ENCODE measurements at regions of chr1 and their contacts with region 1.

Region 1: GRCh38 chr1:184075055-184076029 is 23.8 kb downstream of the TSEN15 start:
- DNase-seq: peak; percentile 82
- H3K4me3 ChIP-seq: no peak overlapping the region
- H3K27ac ChIP-seq: peak overlapping the region; percentile 15 to 73 (median 70)
- H3K4me1 ChIP-seq: peaks cover 0 to 47% (median 42%) of the 10 kb centered on the region in 4 donors
- H3K27me3 ChIP-seq: no peaks in the 10 kb centered on the region
- CTCF ChIP-seq: peak; percentile 60 to 80 (median 70)
- EP300 ChIP-seq: no peak
- POLR2A ChIP-seq: no peak

Region 2: GRCh38 chr1:184017306-184017705 is 58.0 kb before region 1 on chr1:
- intact Hi-C with region 1: no loop called
- DNase-seq: no peak
- H3K4me3 ChIP-seq: no peak overlapping the region
- H3K27ac ChIP-seq: no peak overlapping the region
- H3K4me1 ChIP-seq: peaks cover 0 to 41% (median 32%) of the 10 kb centered on the region in 4 donors
- H3K27me3 ChIP-seq: no peaks in the 10 kb centered on the region
- CTCF ChIP-seq: no peak
- EP300 ChIP-seq: no peak
- POLR2A ChIP-seq: no peak

Region 3: GRCh38 chr1:184127520-184127919 is 52.2 kb after region 1 on chr1:
- intact Hi-C with region 1: no loop called
- DNase-seq: no peak
- H3K4me3 ChIP-seq: no peak overlapping the region
- H3K27ac ChIP-seq: no peak overlapping the region
- H3K4me1 ChIP-seq: no peaks in the 10 kb centered on the region
- H3K27me3 ChIP-seq: no peaks in the 10 kb centered on the region
- CTCF ChIP-seq: no peak
- EP300 ChIP-seq: no peak
- POLR2A ChIP-seq: no peak

Region 4: GRCh38 chr1:184210031-184210430 is 134.7 kb after region 1 on chr1:
- intact Hi-C with region 1: no loop called
- DNase-seq: peak; percentile 68
- H3K4me3 ChIP-seq: no peak overlapping the region
- H3K27ac ChIP-seq: no peak overlapping the region
- H3K4me1 ChIP-seq: peaks cover 0 to 10% (median 0%) of the 10 kb centered on the region in 4 donors
- H3K27me3 ChIP-seq: no peaks in the 10 kb centered on the region
- CTCF ChIP-seq: no peak
- EP300 ChIP-seq: no peak
- POLR2A ChIP-seq: no peak

Region 5: GRCh38 chr1:184222652-184223052 is 147.3 kb after region 1 on chr1:
- intact Hi-C with region 1: loop called (anchors 5 kb)
- DNase-seq: peak; percentile 70
- H3K4me3 ChIP-seq: peak overlapping the region in 1 of 4 donors; percentile 8
- H3K27ac ChIP-seq: no peak overlapping the region
- H3K4me1 ChIP-seq: peaks cover 0 to 6% (median 2%) of the 10 kb centered on the region in 4 donors
- H3K27me3 ChIP-seq: no peaks in the 10 kb centered on the region
- CTCF ChIP-seq: peak; percentile 77 to 96 (median 92)
- EP300 ChIP-seq: no peak
- POLR2A ChIP-seq: no peak

Region 6: GRCh38 chr1:184563308-184563707 is 488.0 kb after region 1 on chr1:
- intact Hi-C with region 1: loop called (anchors 5 kb)
- DNase-seq: no peak
- H3K4me3 ChIP-seq: no peak overlapping the region
- H3K27ac ChIP-seq: peak overlapping the region in 2 of 4 donors; percentile 31 to 54
- H3K4me1 ChIP-seq: peaks cover 0 to 27% (median 23%) of the 10 kb centered on the region in 4 donors
- H3K27me3 ChIP-seq: no peaks in the 10 kb centered on the region
- CTCF ChIP-seq: peak in 3 of 4 experiments; percentile 14 to 49 (median 32)
- EP300 ChIP-seq: no peak
- POLR2A ChIP-seq: no peak

Region 7: DNA sequence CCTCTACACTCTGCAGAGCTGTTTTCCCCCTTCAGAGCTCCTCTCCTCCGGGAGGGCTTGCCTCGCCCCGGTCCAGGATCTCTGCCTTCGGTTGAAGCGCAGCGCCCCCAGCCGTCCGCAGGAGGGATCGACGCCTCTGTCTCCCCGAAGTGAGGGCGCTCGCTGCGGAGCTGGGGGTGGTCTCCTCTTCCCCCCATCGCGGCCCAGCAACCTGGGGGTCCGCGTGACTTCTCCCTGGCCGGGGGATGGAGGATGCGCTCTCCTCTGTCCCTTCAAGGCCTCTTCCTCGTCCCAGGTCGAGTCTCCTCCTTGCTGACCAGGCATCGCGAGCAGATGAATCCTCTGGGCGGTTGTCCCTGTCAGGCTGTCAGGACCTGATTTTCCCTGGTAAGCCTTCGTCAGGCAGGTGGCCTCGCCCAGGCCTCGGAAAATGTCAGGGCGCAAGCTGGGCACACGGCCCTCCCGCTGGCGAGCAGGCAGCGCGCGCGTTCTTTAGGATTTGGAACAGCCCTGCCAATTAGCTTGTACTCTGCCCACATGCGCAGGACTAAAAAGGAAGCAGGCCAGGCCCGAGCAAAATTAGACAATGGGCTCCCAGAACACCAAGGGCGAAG is 588.8 kb after region 1 on chr1:
- intact Hi-C with region 1: loop called (anchors 2 kb)
- DNase-seq: peak; percentile 92
- H3K4me3 ChIP-seq: peak overlapping the region in 3 of 4 donors; percentile 12 to 34 (median 29)
- H3K27ac ChIP-seq: peak overlapping the region in 1 of 4 donors; percentile 29
- H3K4me1 ChIP-seq: peaks cover 0 to 36% (median 13%) of the 10 kb centered on the region in 4 donors
- H3K27me3 ChIP-seq: no peaks in the 10 kb centered on the region
- CTCF ChIP-seq: peak; percentile 85 to 93 (median 92)
- EP300 ChIP-seq: no peak
- POLR2A ChIP-seq: no peak

Region 8: DNA sequence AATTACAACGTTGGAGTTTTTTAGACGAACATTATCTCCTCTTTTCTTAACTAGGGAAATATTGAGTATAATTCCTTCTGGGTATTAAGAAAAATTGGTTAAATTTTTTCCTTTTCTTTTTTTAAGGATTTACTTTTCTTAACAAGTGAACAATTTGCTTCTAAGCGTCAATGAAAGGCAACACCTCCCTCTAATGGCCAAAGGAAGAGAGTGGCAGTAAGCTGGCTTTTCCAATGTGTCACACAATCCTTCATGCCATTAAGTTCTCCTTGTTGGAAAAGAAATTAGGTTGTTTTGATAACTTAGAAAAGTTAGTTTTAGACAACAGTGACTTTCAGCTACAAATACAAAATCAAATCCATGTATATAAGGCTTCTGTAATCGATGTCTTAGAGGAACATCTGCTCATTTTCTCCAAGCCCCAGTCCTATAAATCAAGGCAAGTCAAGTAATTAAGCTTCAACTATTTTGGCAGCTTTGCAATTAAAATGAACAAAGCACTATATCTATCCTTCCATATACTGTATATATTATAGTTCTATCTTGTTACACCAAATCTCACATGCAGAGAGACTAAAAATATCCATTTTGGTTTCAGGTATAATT is 616.5 kb after region 1 on chr1:
- intact Hi-C with region 1: loop called (anchors 2 kb)
- DNase-seq: no peak
- H3K4me3 ChIP-seq: no peak overlapping the region
- H3K27ac ChIP-seq: no peak overlapping the region
- H3K4me1 ChIP-seq: no peaks in the 10 kb centered on the region
- H3K27me3 ChIP-seq: no peaks in the 10 kb centered on the region
- CTCF ChIP-seq: peak; percentile 11 to 81 (median 73)
- EP300 ChIP-seq: no peak
- POLR2A ChIP-seq: no peak